Caco-2 (cell line): ENCODE measurements at regions of chr7 and their contacts with region 1.

Region 1: GRCh38 chr7:29189743-29190201 is 4.8 kb upstream of the CHN2 start:
- DNase-seq: peak; percentile 87 to 88
- H3K4me3 ChIP-seq: no peak overlapping the region
- H3K4me3 Mint-ChIP-seq: peak overlapping the region; percentile 60
- H3K27ac Mint-ChIP-seq: peak overlapping the region; percentile 18
- H3K4me1 ChIP-seq: peaks cover 26% of the 10 kb centered on the region
- H3K4me1 Mint-ChIP-seq: peaks cover 19% of the 10 kb centered on the region
- H3K27me3 ChIP-seq: no peaks in the 10 kb centered on the region
- H3K27me3 Mint-ChIP-seq: no peaks in the 10 kb centered on the region
- CTCF ChIP-seq: peak; percentile 91 to 96

Region 2: DNA sequence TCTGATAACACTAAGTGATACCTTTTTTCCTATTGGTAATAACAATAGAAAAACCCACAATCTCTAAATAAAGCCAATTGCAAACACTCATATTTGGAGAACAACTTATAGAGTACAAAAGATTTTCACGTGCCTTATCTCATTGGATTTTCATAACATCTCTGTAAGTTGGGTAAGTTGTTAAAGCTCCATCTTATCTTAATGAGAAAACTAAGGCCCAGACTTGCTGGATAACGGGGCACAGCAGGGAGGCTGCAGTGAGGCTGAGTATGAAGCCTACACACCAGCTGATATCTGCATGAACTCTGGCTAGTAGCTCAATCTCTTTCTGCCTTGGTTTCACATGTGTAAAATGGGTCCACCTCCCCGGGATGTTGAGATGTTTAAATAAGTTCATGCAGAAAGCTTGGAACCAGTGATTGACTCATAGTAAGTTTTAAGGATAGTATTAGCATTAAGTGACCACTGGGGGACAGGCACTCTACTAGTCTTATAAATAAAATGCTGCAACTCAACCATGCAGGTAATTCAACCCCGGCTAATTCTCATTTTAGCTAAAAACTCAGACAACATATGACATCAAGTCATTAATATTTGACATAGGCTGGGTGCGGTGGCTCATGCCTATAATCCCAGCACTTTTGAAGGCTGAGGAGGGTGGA is 70.1 kb before region 1 on chr7:
- CTCF ChIA-PET with region 1: interaction called, 29 read pairs
- POLR2A ChIA-PET with region 1: no interaction called
- intact Hi-C with region 1: no loop called
- DNase-seq: no peak
- H3K4me3 ChIP-seq: no peak overlapping the region
- H3K4me3 Mint-ChIP-seq: no peak overlapping the region
- H3K27ac Mint-ChIP-seq: no peak overlapping the region
- H3K4me1 ChIP-seq: peaks cover 35% of the 10 kb centered on the region
- H3K4me1 Mint-ChIP-seq: peaks cover 44% of the 10 kb centered on the region
- H3K27me3 ChIP-seq: no peaks in the 10 kb centered on the region
- H3K27me3 Mint-ChIP-seq: no peaks in the 10 kb centered on the region
- CTCF ChIP-seq: peak in 1 of 2 experiments; percentile 18

Region 3: DNA sequence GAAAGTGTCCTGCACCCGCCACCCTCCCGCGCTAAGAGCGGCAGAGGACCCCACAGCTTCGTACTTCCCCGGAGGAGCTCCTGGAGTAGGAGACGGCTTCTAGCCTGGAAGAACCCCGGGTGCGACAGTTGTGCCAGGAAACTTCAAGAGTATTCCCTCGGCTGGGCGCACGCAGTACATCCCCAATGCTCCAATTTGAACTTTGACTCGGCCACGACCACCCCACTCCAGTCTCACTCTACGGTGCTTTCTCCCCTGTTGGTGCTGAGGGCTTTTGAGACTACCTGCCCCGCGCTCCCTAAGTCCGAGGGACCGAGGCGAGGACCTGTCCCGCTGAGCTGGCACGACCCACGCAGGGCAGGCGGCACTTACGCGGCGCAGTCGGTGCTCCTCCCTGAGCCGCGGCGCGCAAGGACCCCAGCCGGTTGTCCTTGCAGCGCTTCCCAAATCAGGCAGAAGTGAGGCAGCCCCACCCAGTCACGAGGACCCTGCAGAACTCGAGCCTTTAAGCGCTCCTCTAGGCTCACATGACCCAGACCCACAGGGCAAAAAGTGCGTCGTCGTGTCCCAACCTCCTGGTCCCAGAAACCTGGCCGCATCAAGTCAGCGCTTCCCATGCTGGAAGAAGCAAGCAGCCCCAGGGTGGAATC is 43.6 kb before region 1 on chr7 and contains the start of gene CPVL:
- CTCF ChIA-PET with region 1: interaction called, 5 read pairs
- POLR2A ChIA-PET with region 1: no interaction called
- intact Hi-C with region 1: loop called (anchors 2 kb)
- DNase-seq: peak; percentile 88 to 92
- H3K4me3 ChIP-seq: peak within 1 kb of the TSS; percentile 54
- H3K4me3 Mint-ChIP-seq: peak within 1 kb of the TSS; percentile 98
- H3K27ac Mint-ChIP-seq: peak within 1 kb of the TSS; percentile 91
- H3K4me1 ChIP-seq: peaks cover 27% of the 10 kb centered on the region
- H3K4me1 Mint-ChIP-seq: peaks cover 20% of the 10 kb centered on the region
- H3K27me3 ChIP-seq: no peaks in the 10 kb centered on the region
- H3K27me3 Mint-ChIP-seq: no peaks in the 10 kb centered on the region
- CTCF ChIP-seq: no peak
- total RNA-seq, gene CPVL: 108 and 109 TPM in 2 replicates

Region 4: DNA sequence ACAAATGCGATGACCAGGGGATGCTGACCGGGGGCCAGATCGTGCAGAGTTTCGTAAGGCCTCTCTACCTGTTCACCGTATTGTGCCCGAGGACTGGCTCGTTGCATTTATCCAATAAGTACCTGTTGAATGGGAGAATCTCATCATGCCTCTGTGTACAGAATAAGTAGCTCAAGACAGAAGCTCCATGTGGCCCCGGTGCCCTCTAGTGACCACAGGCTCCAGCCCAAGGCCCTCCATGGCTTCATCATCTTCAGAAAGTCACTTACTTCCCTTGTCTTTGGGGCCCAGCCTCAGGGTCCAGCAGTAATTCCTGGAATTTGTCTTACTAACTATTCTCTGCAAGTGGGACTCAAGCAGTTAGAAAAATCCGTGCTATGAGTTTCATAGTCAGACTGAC is 155.8 kb after region 1 on chr7:
- CTCF ChIA-PET with region 1: interaction called, 38 read pairs
- POLR2A ChIA-PET with region 1: no interaction called
- intact Hi-C with region 1: loop called (anchors 1 kb)
- DNase-seq: peak; percentile 63 to 64
- H3K4me3 ChIP-seq: no peak overlapping the region
- H3K4me3 Mint-ChIP-seq: no peak overlapping the region
- H3K27ac Mint-ChIP-seq: no peak overlapping the region
- H3K4me1 ChIP-seq: no peaks in the 10 kb centered on the region; the same call in 1 of the 2 replicates
- H3K4me1 Mint-ChIP-seq: no peaks in the 10 kb centered on the region
- H3K27me3 ChIP-seq: no peaks in the 10 kb centered on the region
- H3K27me3 Mint-ChIP-seq: no peaks in the 10 kb centered on the region
- CTCF ChIP-seq: peak; percentile 55 to 81